A549 (cell line): ENCODE measurements at regions of chr11 and their contacts with region 1.

Region 1: GRCh38 chr11:75371941-75372789 is 20.7 kb upstream of the ARRB1 start:
- DNase-seq: peak; percentile 73 to 96
- ATAC-seq: peak; percentile 95 to 97
- H3K4me3 ChIP-seq: peak overlapping the region; percentile 12; the same call in 1 of the 3 replicates
- H3K27ac ChIP-seq: peak overlapping the region; percentile 72 to 84
- H3K4me1 ChIP-seq: peaks cover 19% of the 10 kb centered on the region
- CTCF ChIP-seq: no peak
- EP300 ChIP-seq: peak; percentile 43 to 58; a peak in 2 of 5 replicates
- POLR2A ChIP-seq: no peak
- RAD21 ChIP-seq: peak in 1 of 2 experiments; percentile 21; a peak in 1 of 5 replicates

Region 2: GRCh38 chr11:75328426-75329277 is 43.5 kb before region 1 on chr11:
- CTCF ChIA-PET with region 1: interaction called, 22 read pairs
- POLR2A ChIA-PET with region 1: no interaction called
- DNase-seq: peak; percentile 85 to 86
- ATAC-seq: peak; percentile 94 to 95
- H3K4me3 ChIP-seq: no peak overlapping the region
- H3K27ac ChIP-seq: peak overlapping the region; percentile 17 to 57; a peak in 5 of 6 replicates
- H3K4me1 ChIP-seq: peaks cover 62% of the 10 kb centered on the region
- CTCF ChIP-seq: peak; percentile 85
- EP300 ChIP-seq: no peak
- POLR2A ChIP-seq: no peak
- RAD21 ChIP-seq: peak; percentile 96 to 98

Region 3: DNA sequence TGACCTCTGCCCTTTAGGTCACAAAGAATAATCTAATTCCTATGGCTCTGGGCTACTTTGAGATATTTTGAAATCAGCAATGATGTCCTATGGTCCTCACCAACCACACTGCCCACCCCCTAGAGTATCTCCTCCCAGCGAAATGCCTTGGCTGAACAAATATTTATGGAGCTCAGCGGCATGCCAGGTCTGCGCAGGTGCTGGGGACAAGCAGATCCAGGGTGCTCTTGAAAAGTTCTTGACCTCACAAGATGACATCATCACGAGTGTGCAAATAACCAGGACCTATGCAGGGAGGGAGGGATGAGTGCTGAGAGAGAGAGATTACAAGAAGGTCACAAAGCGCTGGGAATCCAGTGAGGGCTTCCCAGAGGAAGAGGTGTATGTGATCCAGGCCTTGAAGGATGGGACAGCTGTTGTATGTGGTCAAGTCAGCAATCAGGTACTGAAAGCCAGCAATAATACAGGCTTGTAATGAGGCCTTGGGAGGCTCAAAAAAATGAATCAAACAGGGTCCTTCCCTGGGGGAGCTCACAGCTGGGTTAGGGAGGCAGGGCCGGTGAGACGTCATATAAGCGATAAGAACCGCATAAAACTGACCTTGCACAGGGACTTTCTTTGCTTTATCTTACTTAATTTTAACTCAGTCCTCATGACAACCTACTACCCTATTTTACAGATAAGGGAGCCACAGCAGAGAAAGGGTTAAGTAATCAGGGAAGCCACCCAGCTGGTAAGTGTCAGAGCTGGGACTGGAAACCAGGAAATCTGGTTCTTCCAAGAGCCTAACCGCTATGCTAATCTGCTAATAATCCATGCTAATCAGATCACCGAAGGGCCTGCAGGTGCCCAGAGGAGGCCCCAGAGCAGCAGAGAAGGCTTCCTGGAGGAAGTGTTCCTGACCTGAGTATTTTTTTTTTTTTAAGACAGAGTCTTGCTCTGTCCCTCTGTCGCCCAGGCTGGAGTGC is 29.0 kb before region 1 on chr11:
- CTCF ChIA-PET with region 1: interaction called, 39 read pairs
- POLR2A ChIA-PET with region 1: no interaction called
- DNase-seq: peak; percentile 76 to 94
- ATAC-seq: peak; percentile 44 to 56; a peak in 5 of 6 replicates
- H3K4me3 ChIP-seq: no peak overlapping the region
- H3K27ac ChIP-seq: peak overlapping the region; percentile 76 to 80
- H3K4me1 ChIP-seq: peaks cover 81% of the 10 kb centered on the region
- CTCF ChIP-seq: no peak
- EP300 ChIP-seq: no peak
- POLR2A ChIP-seq: no peak
- RAD21 ChIP-seq: no peak

Region 4: DNA sequence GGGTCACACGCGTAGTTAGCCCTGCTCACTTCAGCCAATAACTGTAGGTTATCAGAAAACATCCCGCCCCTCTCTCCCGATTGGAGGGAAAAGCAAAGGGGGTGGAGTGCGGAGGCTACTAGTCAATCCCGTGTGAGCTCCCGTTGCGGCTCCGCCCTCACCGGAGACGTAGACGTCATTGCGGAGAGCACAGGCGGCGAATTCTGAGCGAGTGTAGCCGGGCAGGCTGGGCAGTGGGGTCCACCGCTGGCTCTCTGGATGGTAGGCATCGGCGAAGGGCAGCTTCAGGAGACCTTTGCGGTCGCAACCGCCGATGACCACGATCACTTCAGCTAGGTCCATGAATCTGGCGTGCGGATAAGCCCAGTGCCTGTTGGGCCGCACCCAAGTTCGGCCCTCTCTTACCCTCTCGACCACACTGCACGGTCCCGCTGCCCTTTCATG is 56.1 kb after region 1 on chr11:
- CTCF ChIA-PET with region 1: no interaction called
- POLR2A ChIA-PET with region 1: interaction called, 13 read pairs
- DNase-seq: no peak
- ATAC-seq: no peak
- H3K4me3 ChIP-seq: no peak overlapping the region
- H3K27ac ChIP-seq: no peak overlapping the region
- H3K4me1 ChIP-seq: peaks cover 16% of the 10 kb centered on the region
- CTCF ChIP-seq: no peak
- EP300 ChIP-seq: no peak
- POLR2A ChIP-seq: no peak
- RAD21 ChIP-seq: no peak